Prostate gland (tissue), 2 donors: ENCODE measurements at regions of chr4 and their contacts with region 1.

Region 1: GRCh38 chr4:7295911-7296660 is 103.7 kb downstream of the SORCS2 start:
- DNase-seq: no peak
- H3K4me3 ChIP-seq: no peak overlapping the region
- H3K27ac ChIP-seq: no peak overlapping the region
- H3K4me1 ChIP-seq: no peaks in the 10 kb centered on the region
- H3K27me3 ChIP-seq: no peaks in the 10 kb centered on the region
- CTCF ChIP-seq: peak; percentile 46 to 74 (median 52)
- POLR2A ChIP-seq: no peak

Region 2: GRCh38 chr4:7101692-7102515 is 194.2 kb before region 1 on chr4:
- intact Hi-C with region 1: loop called (anchors 10 kb)
- DNase-seq: peak; percentile 48
- H3K4me3 ChIP-seq: no peak overlapping the region
- H3K27ac ChIP-seq: peak overlapping the region in 1 of 2 donors; percentile 75
- H3K4me1 ChIP-seq: peaks cover 2% of the 10 kb centered on the region
- H3K27me3 ChIP-seq: no peaks in the 10 kb centered on the region
- CTCF ChIP-seq: peak; percentile 28 to 64 (median 48)
- POLR2A ChIP-seq: no peak

Region 3: GRCh38 chr4:7487502-7487901 is 191.4 kb after region 1 on chr4:
- intact Hi-C with region 1: no loop called
- DNase-seq: no peak
- H3K4me3 ChIP-seq: no peak overlapping the region
- H3K27ac ChIP-seq: no peak overlapping the region
- H3K4me1 ChIP-seq: no peaks in the 10 kb centered on the region
- H3K27me3 ChIP-seq: no peaks in the 10 kb centered on the region
- CTCF ChIP-seq: no peak
- POLR2A ChIP-seq: no peak

Region 4: GRCh38 chr4:7564242-7564641 is 268.2 kb after region 1 on chr4:
- intact Hi-C with region 1: no loop called
- DNase-seq: no peak
- H3K4me3 ChIP-seq: no peak overlapping the region
- H3K27ac ChIP-seq: no peak overlapping the region
- H3K4me1 ChIP-seq: no peaks in the 10 kb centered on the region
- H3K27me3 ChIP-seq: no peaks in the 10 kb centered on the region
- CTCF ChIP-seq: no peak
- POLR2A ChIP-seq: no peak